ENCODE measurements at regions of chr2 and their contacts with region 1.

Region 1: GRCh38 chr2:238720232-238720672 is 127.6 kb upstream of the TWIST2 start:
- DNase-seq: peak in 1 of 2 donors; percentile 74
- H3K4me3 ChIP-seq: no peak overlapping the region
- H3K27ac ChIP-seq: no peak overlapping the region
- H3K4me1 ChIP-seq: peaks cover 0 to 4% of the 10 kb centered on the region in 2 donors
- H3K27me3 ChIP-seq: no peaks in the 10 kb centered on the region
- CTCF ChIP-seq: peak; percentile 43 to 66 (median 61)

Region 2: GRCh38 chr2:237895544-237896506 is 824.4 kb before region 1 on chr2:
- intact Hi-C with region 1: loop called (anchors 10 kb)
- DNase-seq: peak; percentile 70 to 94
- H3K4me3 ChIP-seq: no peak overlapping the region
- H3K27ac ChIP-seq: peak overlapping the region; percentile 96 to 99
- H3K4me1 ChIP-seq: peaks cover 40 to 80% of the 10 kb centered on the region in 2 donors
- H3K27me3 ChIP-seq: no peaks in the 10 kb centered on the region
- CTCF ChIP-seq: no peak

Region 3: GRCh38 chr2:238754259-238754658 is 34.0 kb after region 1 on chr2:
- intact Hi-C with region 1: no loop called
- DNase-seq: no peak
- H3K4me3 ChIP-seq: no peak overlapping the region
- H3K27ac ChIP-seq: no peak overlapping the region
- H3K4me1 ChIP-seq: no peaks in the 10 kb centered on the region
- H3K27me3 ChIP-seq: no peaks in the 10 kb centered on the region
- CTCF ChIP-seq: no peak

Region 4: DNA sequence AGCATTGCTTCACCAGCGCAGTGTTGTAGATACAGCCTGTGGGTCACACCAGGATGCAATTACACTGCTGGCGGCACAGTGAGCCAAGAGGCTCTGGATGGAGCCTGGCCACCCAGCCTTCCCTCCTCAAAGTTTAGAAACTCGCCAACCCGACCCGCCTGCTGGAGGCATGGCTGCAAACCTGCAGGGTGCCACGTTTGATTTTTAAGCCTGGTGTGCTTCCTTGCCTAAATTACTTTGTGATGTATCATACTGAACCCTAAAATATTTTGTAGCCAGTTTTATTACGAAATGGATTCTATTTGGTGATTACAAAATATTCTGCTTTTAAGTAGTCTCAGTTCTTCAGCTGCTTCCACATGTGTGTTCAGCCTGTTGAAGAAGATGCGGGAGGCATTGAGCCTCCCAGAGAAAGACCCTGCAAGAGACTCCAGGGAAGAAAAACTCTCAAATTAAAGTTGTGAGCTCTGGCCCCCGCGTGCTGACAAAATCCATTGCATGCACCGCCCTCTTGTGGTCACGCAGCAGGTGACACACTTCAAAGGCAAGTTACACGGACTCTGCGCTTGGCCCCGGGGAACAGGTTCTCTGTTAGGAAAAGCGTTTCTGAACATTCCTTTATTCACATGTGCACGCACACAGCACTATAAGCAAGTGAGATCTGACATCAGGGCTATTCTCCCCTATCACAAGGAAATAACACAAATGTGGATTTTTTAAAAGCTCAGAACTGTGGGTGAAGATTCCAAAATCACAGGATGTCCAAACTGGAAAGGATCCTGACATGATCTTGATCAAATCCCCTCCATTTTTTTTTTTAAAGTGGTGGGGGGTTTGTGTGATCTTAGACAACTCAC is 64.6 kb after region 1 on chr2:
- intact Hi-C with region 1: loop called (anchors 2 kb)
- DNase-seq: peak in 1 of 2 donors; percentile 81
- H3K4me3 ChIP-seq: peak overlapping the region in 1 of 2 donors; percentile 38
- H3K27ac ChIP-seq: peak overlapping the region; percentile 1 to 62
- H3K4me1 ChIP-seq: no peaks in the 10 kb centered on the region
- H3K27me3 ChIP-seq: no peaks in the 10 kb centered on the region
- CTCF ChIP-seq: peak; percentile 82 to 89 (median 82)

Region 5: GRCh38 chr2:238835726-238836301 is 115.6 kb after region 1 on chr2:
- intact Hi-C with region 1: no loop called
- DNase-seq: no peak
- H3K4me3 ChIP-seq: no peak overlapping the region
- H3K27ac ChIP-seq: no peak overlapping the region
- H3K4me1 ChIP-seq: no peaks in the 10 kb centered on the region
- H3K27me3 ChIP-seq: no peaks in the 10 kb centered on the region
- CTCF ChIP-seq: no peak

Region 6: DNA sequence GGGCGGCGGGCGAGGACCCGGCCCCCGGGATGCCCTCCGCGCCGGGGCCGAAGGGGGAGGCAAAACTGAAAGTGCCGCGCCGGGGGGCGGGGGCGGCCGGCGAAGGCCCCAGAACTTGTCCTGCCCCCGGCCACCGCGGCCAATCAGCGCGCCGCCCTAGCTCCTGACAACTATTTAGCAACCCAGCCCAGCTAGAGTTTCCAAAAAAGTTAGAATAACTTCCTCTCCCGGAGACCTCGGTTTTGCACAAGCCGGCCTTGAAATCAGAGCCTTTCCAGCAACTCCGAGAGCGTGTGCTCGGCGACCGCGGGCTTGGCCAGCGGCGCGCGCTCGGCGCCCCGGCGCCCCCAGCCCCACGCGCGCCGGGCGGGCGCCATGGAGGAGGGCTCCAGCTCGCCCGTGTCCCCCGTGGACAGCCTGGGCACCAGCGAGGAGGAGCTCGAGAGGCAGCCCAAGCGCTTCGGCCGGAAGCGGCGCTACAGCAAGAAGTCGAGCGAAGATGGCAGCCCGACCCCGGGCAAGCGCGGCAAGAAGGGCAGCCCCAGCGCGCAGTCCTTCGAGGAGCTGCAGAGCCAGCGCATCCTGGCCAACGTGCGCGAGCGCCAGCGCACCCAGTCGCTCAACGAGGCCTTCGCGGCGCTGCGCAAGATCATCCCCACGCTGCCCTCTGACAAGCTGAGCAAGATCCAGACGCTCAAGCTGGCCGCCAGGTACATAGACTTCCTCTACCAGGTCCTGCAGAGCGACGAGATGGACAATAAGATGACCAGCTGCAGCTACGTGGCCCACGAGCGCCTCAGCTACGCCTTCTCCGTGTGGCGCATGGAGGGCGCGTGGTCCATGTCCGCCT is 127.8 kb after region 1 on chr2 and contains the start of gene TWIST2:
- intact Hi-C with region 1: loop called (anchors 5 kb)
- DNase-seq: peak; percentile 48 to 92
- H3K4me3 ChIP-seq: peak within 1 kb of the TSS; percentile 80 to 86
- H3K27ac ChIP-seq: peak within 1 kb of the TSS; percentile 80 to 88
- H3K4me1 ChIP-seq: peaks cover 0 to 15% of the 10 kb centered on the region in 2 donors
- H3K27me3 ChIP-seq: no peaks in the 10 kb centered on the region
- CTCF ChIP-seq: peak in 2 of 3 experiments; percentile 10 to 33
- total RNA-seq, gene TWIST2: 108 TPM

Region 7: DNA sequence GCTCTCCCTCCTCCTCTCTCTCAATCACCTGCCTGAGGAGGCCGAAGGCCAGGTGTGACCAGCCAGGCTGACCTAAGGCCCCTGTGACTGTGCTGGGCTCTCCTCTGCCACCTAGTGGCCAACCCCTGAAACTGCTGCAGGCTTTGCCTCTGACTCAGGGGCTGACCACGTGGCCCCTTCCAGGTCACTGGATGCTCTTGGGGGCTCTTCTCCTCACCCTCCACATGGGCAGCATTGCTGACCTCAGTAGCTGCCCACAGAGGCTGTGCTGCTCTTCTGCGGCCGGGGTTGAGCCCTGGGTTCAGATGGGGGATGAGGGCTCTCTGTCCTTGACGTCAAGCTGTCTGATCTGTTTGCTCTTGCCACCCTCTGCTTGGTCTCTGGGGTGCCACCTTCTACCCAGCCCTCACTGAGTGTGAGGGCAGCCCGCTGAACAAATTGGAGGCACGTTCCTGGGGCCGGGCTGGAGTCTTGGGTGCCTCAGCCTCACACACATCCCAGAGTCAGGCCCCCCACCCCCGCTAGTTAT is 250.4 kb after region 1 on chr2:
- intact Hi-C with region 1: loop called (anchors 5 kb)
- DNase-seq: peak in 1 of 2 donors; percentile 78
- H3K4me3 ChIP-seq: no peak overlapping the region
- H3K27ac ChIP-seq: no peak overlapping the region
- H3K4me1 ChIP-seq: no peaks in the 10 kb centered on the region
- H3K27me3 ChIP-seq: no peaks in the 10 kb centered on the region
- CTCF ChIP-seq: peak; percentile 88 to 99 (median 99)

Measured in ascending aorta (tissue), 2 donors.